Posterior vena cava (tissue), 2 donors: ENCODE measurements at regions of chr11 and their contacts with region 1.

Region 1: GRCh38 chr11:75013051-75013450 is 24.3 kb downstream of the NEU3 start:
- DNase-seq: no peak

Region 2: GRCh38 chr11:75069473-75069872 is 56.4 kb after region 1 on chr11:
- intact Hi-C with region 1: loop called in 1 of 2 experiments (anchors 2 kb)
- DNase-seq: no peak